CD8-positive, alpha-beta T cell (primary cell): ENCODE measurements at regions of chr3 and their contacts with region 1.

Region 1: DNA sequence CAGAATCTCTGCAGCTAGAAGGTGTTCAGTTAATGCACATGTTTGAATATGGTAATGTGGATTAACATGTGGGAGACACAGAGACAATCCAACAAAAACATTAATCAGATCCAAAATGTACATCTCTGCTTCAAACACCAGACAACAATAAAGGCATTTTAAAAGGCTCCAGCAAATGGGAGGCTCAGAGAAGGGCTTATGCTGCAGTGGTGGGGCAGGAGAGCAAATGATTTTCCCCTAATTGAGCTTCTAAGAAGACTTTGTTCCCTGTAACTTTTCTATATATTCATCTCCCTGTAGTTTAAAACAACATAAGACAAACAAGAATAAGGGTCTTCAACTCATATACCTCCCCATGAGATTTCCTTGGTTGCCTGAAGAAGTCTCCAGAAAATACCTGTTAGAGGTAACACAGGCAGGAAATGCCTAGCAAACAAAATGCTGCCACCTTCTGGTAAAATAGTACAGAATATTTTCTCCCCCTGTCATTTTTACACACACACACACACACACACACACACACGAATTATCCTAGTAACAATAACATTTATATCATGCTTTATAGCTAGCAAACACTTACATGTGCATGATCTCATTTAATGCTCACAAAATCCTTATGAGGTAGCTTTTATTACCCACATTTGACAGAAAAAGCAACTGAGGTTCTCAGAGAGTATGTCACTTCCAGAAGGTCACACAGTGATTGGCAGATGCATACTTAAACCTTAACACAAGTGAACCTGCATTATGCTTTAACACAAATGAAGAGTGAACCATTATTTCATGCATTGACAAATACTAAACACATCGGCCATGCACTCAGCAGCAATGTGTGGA is 123.4 kb upstream of the MB21D2 start:
- DNase-seq: peak in 2 of 9 experiments; percentile 5 to 35
- ATAC-seq: no peak
- H3K4me3 ChIP-seq: no peak overlapping the region
- H3K4me3 Mint-ChIP-seq: no peak overlapping the region
- H3K27ac ChIP-seq: no peak overlapping the region
- H3K27ac Mint-ChIP-seq: no peak overlapping the region
- H3K4me1 ChIP-seq: no peaks in the 10 kb centered on the region
- H3K4me1 Mint-ChIP-seq: no peaks in the 10 kb centered on the region
- H3K27me3 ChIP-seq: no peaks in the 10 kb centered on the region
- H3K27me3 Mint-ChIP-seq: no peaks in the 10 kb centered on the region
- CTCF ChIP-seq: peak; percentile 36

Region 2: GRCh38 chr3:192467230-192468140 is 573.6 kb before region 1 on chr3:
- CTCF ChIA-PET with region 1: no interaction called
- POLR2A ChIA-PET with region 1: no interaction called
- intact Hi-C with region 1: loop called in 1 of 2 experiments (anchors 2 kb)
- DNase-seq: peak in 8 of 9 experiments; percentile 12 to 51 (median 36)
- ATAC-seq: peak; percentile 69
- H3K4me3 ChIP-seq: no peak overlapping the region
- H3K4me3 Mint-ChIP-seq: no peak overlapping the region
- H3K27ac ChIP-seq: no peak overlapping the region
- H3K27ac Mint-ChIP-seq: no peak overlapping the region
- H3K4me1 ChIP-seq: no peaks in the 10 kb centered on the region
- H3K4me1 Mint-ChIP-seq: no peaks in the 10 kb centered on the region
- H3K27me3 ChIP-seq: no peaks in the 10 kb centered on the region
- H3K27me3 Mint-ChIP-seq: peaks cover 15% of the 10 kb centered on the region
- CTCF ChIP-seq: peak; percentile 76

Region 3: DNA sequence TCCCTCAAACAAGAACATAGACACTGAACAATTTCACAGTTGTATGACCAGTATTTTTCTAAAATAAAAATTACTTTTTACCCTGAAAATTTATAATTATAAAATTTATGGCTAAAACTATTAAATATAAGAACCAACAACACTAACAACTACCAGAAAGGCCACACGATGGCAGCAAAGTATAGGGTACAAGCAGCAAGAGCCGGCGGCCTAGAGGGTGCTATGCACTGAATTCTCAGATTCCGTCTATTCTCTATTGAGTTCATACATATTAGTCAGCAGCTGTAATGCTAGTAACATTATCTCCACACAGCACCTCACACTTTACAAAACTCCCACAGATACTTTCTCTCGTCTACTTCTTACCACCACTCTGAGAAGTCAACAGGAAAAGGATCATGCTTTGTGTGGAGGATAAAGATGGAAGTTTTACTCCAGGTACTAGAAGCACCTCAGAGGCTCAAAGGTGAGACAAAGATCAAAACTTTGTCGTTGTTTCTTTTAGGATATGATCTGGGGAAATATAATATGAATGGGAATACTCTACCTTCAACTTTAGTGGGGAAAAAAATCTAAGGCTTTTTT is 474.3 kb before region 1 on chr3:
- CTCF ChIA-PET with region 1: no interaction called
- POLR2A ChIA-PET with region 1: no interaction called
- intact Hi-C with region 1: loop called in 1 of 2 experiments (anchors 2 kb)
- DNase-seq: peak in 8 of 9 experiments; percentile 9 to 55 (median 42)
- ATAC-seq: no peak
- H3K4me3 ChIP-seq: no peak overlapping the region
- H3K4me3 Mint-ChIP-seq: no peak overlapping the region
- H3K27ac ChIP-seq: no peak overlapping the region
- H3K27ac Mint-ChIP-seq: no peak overlapping the region
- H3K4me1 ChIP-seq: no peaks in the 10 kb centered on the region
- H3K4me1 Mint-ChIP-seq: peaks cover 2% of the 10 kb centered on the region
- H3K27me3 ChIP-seq: no peaks in the 10 kb centered on the region
- H3K27me3 Mint-ChIP-seq: peaks cover 2% of the 10 kb centered on the region
- CTCF ChIP-seq: peak; percentile 37

Region 4: DNA sequence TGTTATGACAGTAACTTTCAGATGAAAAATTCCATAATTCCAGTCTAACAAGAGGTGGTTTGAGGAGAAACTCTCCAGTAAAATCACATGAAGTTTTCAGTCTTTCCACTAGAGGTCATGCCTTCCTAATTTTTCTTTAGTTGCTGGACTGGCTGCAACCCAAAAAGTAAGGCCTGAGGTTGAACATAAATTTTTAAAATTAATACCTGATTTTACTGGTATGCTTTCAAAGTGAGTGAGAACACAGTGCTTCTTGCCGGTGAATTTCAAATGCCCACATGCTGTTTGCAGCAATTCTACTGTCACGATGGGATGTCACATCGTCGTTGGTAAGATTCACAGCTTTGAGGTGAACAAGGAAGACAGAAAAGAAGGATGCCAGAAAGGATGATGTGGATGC is 224.7 kb before region 1 on chr3:
- CTCF ChIA-PET with region 1: interaction called, 30 read pairs
- POLR2A ChIA-PET with region 1: no interaction called
- intact Hi-C with region 1: loop called (anchors 1 kb)
- DNase-seq: peak in 2 of 9 experiments; percentile 14 to 40
- ATAC-seq: no peak
- H3K4me3 ChIP-seq: no peak overlapping the region
- H3K4me3 Mint-ChIP-seq: no peak overlapping the region
- H3K27ac ChIP-seq: no peak overlapping the region
- H3K27ac Mint-ChIP-seq: no peak overlapping the region
- H3K4me1 ChIP-seq: no peaks in the 10 kb centered on the region
- H3K4me1 Mint-ChIP-seq: no peaks in the 10 kb centered on the region
- H3K27me3 ChIP-seq: no peaks in the 10 kb centered on the region
- H3K27me3 Mint-ChIP-seq: no peaks in the 10 kb centered on the region
- CTCF ChIP-seq: no peak